Heart right ventricle (tissue), 16 donors: ENCODE measurements at regions of chr18 and their contacts with region 1.

Region 1: DNA sequence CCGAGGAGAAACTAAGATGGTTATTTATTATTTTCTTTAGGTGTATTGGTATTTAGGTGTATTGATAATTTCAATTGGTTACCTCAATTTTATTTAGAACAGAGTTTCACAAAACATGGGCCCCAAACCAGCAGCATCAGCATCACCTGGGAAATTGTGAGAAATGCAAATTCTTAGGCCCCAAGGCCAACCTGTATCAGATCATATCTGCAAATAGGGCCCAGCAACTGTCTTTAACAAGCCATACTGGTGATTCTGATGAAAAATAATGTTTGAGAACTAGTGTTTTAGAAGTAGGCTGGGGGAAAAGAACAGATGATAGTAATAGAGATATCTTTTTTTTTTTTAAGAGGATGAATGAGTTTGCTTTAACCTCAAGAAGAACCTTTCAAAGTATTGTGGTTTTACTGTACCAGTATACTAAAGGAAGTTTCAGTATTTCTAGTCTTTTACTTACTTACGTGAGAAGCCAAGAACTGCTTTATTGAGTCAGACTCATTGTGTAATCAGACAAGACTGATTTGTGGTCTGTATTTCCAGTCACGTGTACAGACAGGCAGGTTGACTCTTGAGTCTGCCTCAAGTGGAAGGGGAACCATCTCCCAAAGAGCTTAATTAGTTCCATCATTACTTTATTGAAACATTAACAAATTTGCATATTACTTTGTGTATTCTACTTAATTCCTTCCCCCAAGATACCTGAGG is 60.4 kb upstream of the GAREM1 start:
- DNase-seq: no peak
- ATAC-seq: no peak
- H3K4me3 ChIP-seq: no peak overlapping the region
- H3K27ac ChIP-seq: no peak overlapping the region
- H3K4me1 ChIP-seq: no peaks in the 10 kb centered on the region
- H3K27me3 ChIP-seq: no peaks in the 10 kb centered on the region
- CTCF ChIP-seq: no peak

Region 2: DNA sequence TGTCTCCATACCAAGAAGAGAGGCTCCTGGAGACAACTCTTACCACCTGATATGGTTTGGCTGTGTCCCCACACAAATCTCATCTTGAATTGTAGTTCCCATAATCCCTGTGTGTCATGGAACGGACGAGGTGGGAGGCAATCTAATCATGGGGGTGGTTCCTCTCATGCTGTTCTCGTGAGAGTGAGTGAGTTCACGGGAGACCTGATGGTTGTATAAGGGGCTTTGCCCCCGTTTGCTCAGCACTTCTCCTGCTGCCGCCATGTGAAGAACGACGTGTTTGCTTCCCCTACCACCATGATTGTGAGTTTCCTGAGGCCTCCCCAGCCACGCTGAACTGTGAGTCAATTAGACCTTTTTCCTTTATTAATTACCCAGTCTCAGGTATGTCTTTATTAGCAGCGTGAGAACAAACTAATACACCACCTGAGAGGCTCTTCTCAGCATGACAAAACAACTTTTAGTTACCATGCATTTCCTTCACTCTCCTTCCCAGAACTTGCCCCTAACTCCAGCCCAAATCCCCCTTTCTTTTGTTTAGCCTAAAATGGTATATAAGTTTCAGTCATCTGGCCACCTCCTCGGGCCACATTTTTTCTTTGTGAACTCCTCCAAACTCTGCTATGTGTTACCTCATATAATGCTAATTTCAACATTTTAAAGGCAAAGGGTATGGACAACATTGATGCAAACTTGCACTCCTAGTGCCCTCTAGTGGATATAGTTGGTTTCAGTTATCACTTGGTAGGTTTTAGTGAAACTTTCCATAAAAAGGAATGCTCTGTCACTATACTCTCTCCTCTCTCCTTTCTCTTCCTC is 711.8 kb before region 1 on chr18:
- intact Hi-C with region 1: no loop called
- DNase-seq: no peak
- ATAC-seq: peak in 3 of 8 donors; percentile 44 to 69 (median 46)
- H3K4me3 ChIP-seq: no peak overlapping the region
- H3K27ac ChIP-seq: no peak overlapping the region
- H3K4me1 ChIP-seq: peaks cover 0 to 9% (median 0%) of the 10 kb centered on the region in 9 donors
- H3K27me3 ChIP-seq: no peaks in the 10 kb centered on the region
- CTCF ChIP-seq: peak; percentile 34 to 78 (median 73)

Region 3: GRCh38 chr18:32480581-32480980 is 50.5 kb before region 1 on chr18:
- intact Hi-C with region 1: loop called in 2 of 10 experiments (anchors 5 to 10 kb)
- DNase-seq: no peak
- ATAC-seq: no peak
- H3K4me3 ChIP-seq: no peak overlapping the region
- H3K27ac ChIP-seq: no peak overlapping the region
- H3K4me1 ChIP-seq: no peaks in the 10 kb centered on the region
- H3K27me3 ChIP-seq: peaks cover 0 to 25% (median 10%) of the 10 kb centered on the region in 7 donors
- CTCF ChIP-seq: no peak

Region 4: GRCh38 chr18:32502014-32502413 is 29.1 kb before region 1 on chr18:
- intact Hi-C with region 1: loop called in 1 of 10 experiments (anchors 5 kb)
- DNase-seq: no peak
- ATAC-seq: no peak
- H3K4me3 ChIP-seq: no peak overlapping the region
- H3K27ac ChIP-seq: no peak overlapping the region
- H3K4me1 ChIP-seq: no peaks in the 10 kb centered on the region
- H3K27me3 ChIP-seq: no peaks in the 10 kb centered on the region
- CTCF ChIP-seq: no peak